Naive thymus-derived CD4-positive, alpha-beta T cell (primary cell): ENCODE measurements at regions of chr1 and their contacts with region 1.

Region 1: DNA sequence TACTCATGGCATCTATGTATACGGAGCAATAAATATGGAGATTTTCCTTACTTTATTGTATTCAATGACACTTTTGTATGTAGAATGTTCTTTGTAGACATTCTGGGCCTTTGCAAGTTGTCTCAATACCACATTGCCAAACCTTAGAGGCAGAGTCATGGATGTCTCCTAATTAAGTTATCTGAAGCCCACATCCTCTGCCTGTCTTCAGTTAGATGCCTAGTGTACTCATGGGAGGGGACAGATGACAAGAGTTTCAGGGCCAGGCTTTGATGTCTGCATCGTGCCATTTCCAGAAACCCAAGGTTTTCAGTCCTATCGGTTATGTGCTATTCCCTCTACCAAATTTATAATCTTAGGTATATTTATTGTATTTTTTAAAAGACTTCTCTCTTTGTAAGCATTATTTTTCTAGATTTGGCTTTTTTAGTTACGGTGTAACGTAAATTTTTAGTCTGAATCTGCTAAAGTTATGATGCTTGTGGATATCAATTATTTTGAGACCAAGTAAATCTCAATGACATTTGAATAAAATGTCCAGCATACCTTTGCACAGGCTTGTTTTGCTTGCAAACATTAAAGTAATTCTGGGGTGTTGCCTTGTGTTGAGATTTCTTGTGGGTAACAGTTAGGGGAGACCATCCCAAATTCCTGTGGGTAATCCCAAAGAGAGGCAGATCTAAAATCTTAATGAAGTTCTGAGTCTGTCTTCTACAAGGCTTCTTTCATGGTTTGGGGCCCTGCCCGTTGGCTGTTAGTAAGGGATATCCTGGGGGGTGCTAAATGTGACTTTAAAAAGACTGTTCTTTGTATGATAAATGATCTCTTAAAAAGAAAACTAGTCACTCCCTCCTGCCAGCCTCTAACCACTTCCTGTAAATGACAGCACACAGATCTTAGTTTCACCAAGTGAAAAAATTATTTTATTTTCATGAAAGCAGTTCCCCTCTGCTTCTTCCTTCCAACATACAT is 8.0 kb upstream of the MACF1 start:
- DNase-seq: peak in 7 of 9 donors; percentile 73 to 90 (median 89)
- ATAC-seq: peak; percentile 89
- H3K4me3 ChIP-seq: peak overlapping the region; percentile 62
- H3K4me3 Mint-ChIP-seq: peak overlapping the region; percentile 48 to 88 (median 76)
- H3K27ac ChIP-seq: peak overlapping the region; percentile 78
- H3K27ac Mint-ChIP-seq: peak overlapping the region; percentile 86 to 97 (median 95)
- H3K4me1 ChIP-seq: peaks cover 53 to 58% of the 10 kb centered on the region in 2 donors
- H3K4me1 Mint-ChIP-seq: peaks cover 67 to 91% (median 80%) of the 10 kb centered on the region in 7 donors
- H3K27me3 ChIP-seq: no peaks in the 10 kb centered on the region
- H3K27me3 Mint-ChIP-seq: no peaks in the 10 kb centered on the region

Region 2: GRCh38 chr1:38433084-38433722 is 763.3 kb before region 1 on chr1:
- CTCF ChIA-PET with region 1: no interaction called
- POLR2A ChIA-PET with region 1: no interaction called
- intact Hi-C with region 1: no loop called
- DNase-seq: no peak
- ATAC-seq: no peak
- H3K4me3 ChIP-seq: no peak overlapping the region
- H3K4me3 Mint-ChIP-seq: no peak overlapping the region
- H3K27ac ChIP-seq: no peak overlapping the region
- H3K27ac Mint-ChIP-seq: no peak overlapping the region
- H3K4me1 ChIP-seq: no peaks in the 10 kb centered on the region
- H3K4me1 Mint-ChIP-seq: no peaks in the 10 kb centered on the region
- H3K27me3 ChIP-seq: no peaks in the 10 kb centered on the region
- H3K27me3 Mint-ChIP-seq: peaks cover 12 to 24% (median 19%) of the 10 kb centered on the region in 5 donors

Region 3: GRCh38 chr1:38775175-38775845 is 421.2 kb before region 1 on chr1:
- CTCF ChIA-PET with region 1: no interaction called
- POLR2A ChIA-PET with region 1: no interaction called
- intact Hi-C with region 1: no loop called
- DNase-seq: no peak
- ATAC-seq: no peak
- H3K4me3 ChIP-seq: no peak overlapping the region
- H3K4me3 Mint-ChIP-seq: no peak overlapping the region
- H3K27ac ChIP-seq: no peak overlapping the region
- H3K27ac Mint-ChIP-seq: no peak overlapping the region
- H3K4me1 ChIP-seq: no peaks in the 10 kb centered on the region
- H3K4me1 Mint-ChIP-seq: no peaks in the 10 kb centered on the region
- H3K27me3 ChIP-seq: no peaks in the 10 kb centered on the region
- H3K27me3 Mint-ChIP-seq: peaks cover 6 to 26% (median 15%) of the 10 kb centered on the region in 5 donors

Region 4: GRCh38 chr1:39105061-39105840 is 91.3 kb before region 1 on chr1:
- CTCF ChIA-PET with region 1: interaction called, 11 read pairs
- POLR2A ChIA-PET with region 1: interaction called, 3 read pairs
- intact Hi-C with region 1: loop called (anchors 1 kb)
- DNase-seq: peak; percentile 34 to 76 (median 50)
- ATAC-seq: peak; percentile 83
- H3K4me3 ChIP-seq: peak overlapping the region; percentile 64
- H3K4me3 Mint-ChIP-seq: peak overlapping the region in 6 of 10 donors; percentile 50 to 88 (median 72)
- H3K27ac ChIP-seq: peak overlapping the region; percentile 0
- H3K27ac Mint-ChIP-seq: no peak overlapping the region
- H3K4me1 ChIP-seq: peaks cover 8 to 14% of the 10 kb centered on the region in 2 donors
- H3K4me1 Mint-ChIP-seq: peaks cover 22 to 38% (median 34%) of the 10 kb centered on the region in 7 donors
- H3K27me3 ChIP-seq: no peaks in the 10 kb centered on the region
- H3K27me3 Mint-ChIP-seq: peaks cover 0 to 10% (median 3%) of the 10 kb centered on the region in 5 donors

Region 5: DNA sequence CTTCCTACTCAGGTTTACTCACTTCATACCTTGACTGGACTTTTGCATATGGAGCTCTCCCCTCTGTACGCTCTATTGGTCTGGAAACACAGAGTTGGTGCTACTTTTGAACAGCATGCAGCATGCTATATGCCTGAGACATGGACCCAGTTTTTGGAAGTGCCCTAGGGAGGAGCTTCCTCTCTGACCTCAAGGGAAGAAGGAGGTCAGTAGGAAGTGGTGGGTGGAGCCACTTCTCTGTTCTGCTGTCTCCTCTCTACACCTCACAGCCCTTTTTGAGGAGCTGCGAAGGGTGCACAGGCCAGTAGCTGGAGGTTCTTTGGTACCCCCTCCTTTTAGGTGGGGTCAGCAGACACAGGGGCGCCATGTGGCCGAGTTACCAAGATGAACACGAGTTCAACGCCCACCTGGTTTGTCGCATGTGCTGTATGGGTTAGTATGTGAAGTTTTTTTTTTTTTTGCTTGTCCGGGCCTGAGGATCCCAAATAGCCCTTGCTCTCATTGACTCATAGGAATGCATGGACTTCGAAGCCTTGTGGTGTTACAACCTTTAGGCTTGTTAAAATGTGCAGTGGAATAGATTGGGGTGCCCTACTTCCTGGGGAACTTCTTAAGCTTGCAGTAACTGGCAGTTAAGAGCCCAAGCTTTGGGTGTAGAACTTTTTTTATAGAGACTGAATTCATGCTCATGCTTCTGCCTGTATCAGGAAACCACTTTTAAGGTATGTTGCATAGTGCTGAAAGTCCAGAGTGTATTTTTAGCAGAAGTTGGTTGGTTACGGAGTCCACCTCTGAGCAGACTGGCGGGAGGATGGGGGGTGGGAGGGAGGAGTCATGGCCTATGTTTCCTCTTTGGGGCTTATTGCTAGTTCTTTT is 18.7 kb after region 1 on chr1:
- CTCF ChIA-PET with region 1: interaction called, 72 read pairs
- POLR2A ChIA-PET with region 1: interaction called, 16 read pairs
- intact Hi-C with region 1: loop called (anchors 1 kb)
- DNase-seq: peak in 4 of 9 donors; percentile 37 to 48 (median 46)
- ATAC-seq: peak; percentile 84
- H3K4me3 ChIP-seq: peak overlapping the region; percentile 64
- H3K4me3 Mint-ChIP-seq: peak overlapping the region; percentile 88 to 98 (median 94)
- H3K27ac ChIP-seq: peak overlapping the region; percentile 75
- H3K27ac Mint-ChIP-seq: peak overlapping the region; percentile 84 to 97 (median 92)
- H3K4me1 ChIP-seq: peaks cover 22 to 23% of the 10 kb centered on the region in 2 donors
- H3K4me1 Mint-ChIP-seq: peaks cover 38 to 67% (median 54%) of the 10 kb centered on the region in 7 donors
- H3K27me3 ChIP-seq: no peaks in the 10 kb centered on the region
- H3K27me3 Mint-ChIP-seq: no peaks in the 10 kb centered on the region

Region 6: DNA sequence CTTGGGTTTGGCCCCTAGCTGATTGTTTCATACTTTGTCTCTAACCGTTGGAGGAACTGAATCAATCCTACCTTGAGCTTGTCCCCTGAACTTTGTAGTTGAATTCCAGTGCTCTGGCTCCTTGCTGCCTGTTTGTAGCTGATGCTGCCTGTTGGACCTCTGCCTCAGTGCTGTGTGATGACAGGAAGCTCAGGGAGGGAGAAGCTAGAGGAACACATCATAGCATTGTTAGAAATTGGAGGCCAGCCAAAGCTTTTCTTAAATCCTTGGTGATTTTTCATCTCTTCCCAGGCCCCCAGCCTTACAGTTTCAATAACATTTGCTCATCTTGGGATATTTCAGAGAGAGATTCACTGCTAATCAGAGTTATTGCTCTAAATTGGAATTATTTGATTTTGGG is 41.9 kb after region 1 on chr1:
- CTCF ChIA-PET with region 1: interaction called, 36 read pairs
- POLR2A ChIA-PET with region 1: interaction called, 4 read pairs
- intact Hi-C with region 1: no loop called
- DNase-seq: no peak
- ATAC-seq: no peak
- H3K4me3 ChIP-seq: no peak overlapping the region
- H3K4me3 Mint-ChIP-seq: peak overlapping the region in 5 of 10 donors; percentile 5 to 40 (median 26)
- H3K27ac ChIP-seq: no peak overlapping the region
- H3K27ac Mint-ChIP-seq: peak overlapping the region; percentile 13 to 88 (median 72)
- H3K4me1 ChIP-seq: peaks cover 2 to 14% of the 10 kb centered on the region in 2 donors
- H3K4me1 Mint-ChIP-seq: peaks cover 33 to 67% (median 57%) of the 10 kb centered on the region in 7 donors
- H3K27me3 ChIP-seq: no peaks in the 10 kb centered on the region
- H3K27me3 Mint-ChIP-seq: no peaks in the 10 kb centered on the region

Region 7: DNA sequence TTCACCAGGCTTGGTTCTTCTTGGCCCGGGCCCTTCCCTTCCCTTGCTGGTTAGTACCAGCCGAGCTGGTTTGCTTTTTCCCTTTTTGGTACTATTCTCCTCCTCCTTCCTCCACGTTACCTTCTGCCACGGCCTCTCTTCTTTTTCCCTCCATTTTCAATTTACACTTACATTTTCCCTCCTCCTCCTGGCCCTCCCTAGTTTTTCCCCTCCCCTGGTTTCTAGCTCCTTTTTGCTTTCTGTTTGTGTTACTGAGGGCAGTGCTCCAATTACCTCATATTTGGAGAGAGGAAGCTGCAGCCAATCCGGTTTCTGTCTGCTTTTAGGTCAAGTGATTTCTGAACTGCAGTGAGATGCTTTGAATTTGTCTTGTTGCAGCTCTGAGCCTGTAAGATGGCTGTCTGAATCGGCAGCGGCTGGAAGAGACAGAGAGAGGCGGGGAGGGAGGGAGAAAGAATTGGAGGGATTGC is 71.6 kb after region 1 on chr1:
- CTCF ChIA-PET with region 1: interaction called, 298 read pairs
- POLR2A ChIA-PET with region 1: interaction called, 6 read pairs
- intact Hi-C with region 1: no loop called
- DNase-seq: no peak
- ATAC-seq: peak; percentile 57
- H3K4me3 ChIP-seq: no peak overlapping the region
- H3K4me3 Mint-ChIP-seq: peak overlapping the region; percentile 46 to 84 (median 73)
- H3K27ac ChIP-seq: no peak overlapping the region
- H3K27ac Mint-ChIP-seq: peak overlapping the region; percentile 63 to 86 (median 71)
- H3K4me1 ChIP-seq: peaks cover 16 to 21% of the 10 kb centered on the region in 2 donors
- H3K4me1 Mint-ChIP-seq: peaks cover 58 to 88% (median 80%) of the 10 kb centered on the region in 7 donors
- H3K27me3 ChIP-seq: no peaks in the 10 kb centered on the region
- H3K27me3 Mint-ChIP-seq: no peaks in the 10 kb centered on the region

Region 8: DNA sequence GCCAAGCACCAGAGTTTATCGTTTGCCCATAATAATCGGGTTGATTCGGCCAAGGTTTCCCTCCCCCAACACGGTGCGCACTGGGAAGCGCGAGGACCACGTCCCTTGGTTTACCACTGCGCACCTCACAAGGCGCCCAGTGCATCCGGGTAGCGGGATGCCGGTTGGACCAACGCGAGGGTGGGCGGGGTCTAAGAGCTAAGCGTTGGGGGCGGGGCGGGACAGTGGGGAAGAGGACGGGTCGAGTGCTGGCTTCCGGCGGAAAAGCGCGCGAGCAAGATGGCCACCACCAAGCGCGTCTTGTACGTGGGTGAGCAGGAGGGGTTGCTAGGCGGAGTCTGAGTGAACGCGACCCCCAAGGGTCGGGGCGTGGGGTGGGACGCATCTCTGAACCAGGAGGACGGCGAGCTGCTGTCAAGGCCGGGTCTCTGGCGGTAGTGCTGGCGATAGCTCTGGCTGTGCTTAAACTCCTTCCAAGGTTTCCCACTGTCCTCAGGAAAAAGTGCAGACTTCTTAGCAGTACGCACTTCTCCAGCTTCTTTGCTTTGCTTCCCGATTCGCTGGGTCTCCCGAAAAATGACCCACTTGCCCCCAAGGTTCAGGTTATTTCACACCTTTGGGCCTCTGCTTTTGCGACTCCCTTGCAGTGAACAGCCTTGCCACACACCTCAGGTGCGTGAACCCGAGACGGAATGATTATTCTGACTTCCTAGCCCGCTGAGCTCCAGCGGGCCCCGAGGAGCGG is 542.3 kb after region 1 on chr1 and contains the start of gene PPIE:
- CTCF ChIA-PET with region 1: no interaction called
- POLR2A ChIA-PET with region 1: no interaction called
- intact Hi-C with region 1: no loop called
- DNase-seq: peak; percentile 71 to 88 (median 85)
- ATAC-seq: peak; percentile 99
- H3K4me3 ChIP-seq: peak within 1 kb of the TSS; percentile 88
- H3K4me3 Mint-ChIP-seq: peak within 1 kb of the TSS; percentile 86 to 98 (median 96)
- H3K27ac ChIP-seq: peak within 1 kb of the TSS; percentile 74
- H3K27ac Mint-ChIP-seq: peak within 1 kb of the TSS; percentile 92 to 97 (median 96)
- H3K4me1 ChIP-seq: peaks cover 16 to 17% of the 10 kb centered on the region in 2 donors
- H3K4me1 Mint-ChIP-seq: peaks cover 21 to 44% (median 38%) of the 10 kb centered on the region in 7 donors
- H3K27me3 ChIP-seq: no peaks in the 10 kb centered on the region
- H3K27me3 Mint-ChIP-seq: peaks cover 2 to 16% (median 11%) of the 10 kb centered on the region in 5 donors
- total RNA-seq, gene PPIE: 52.3 to 79.1 (median 61.3) TPM